BJ (cell line): ENCODE measurements at regions of chr11 and their contacts with region 1.

Region 1: DNA sequence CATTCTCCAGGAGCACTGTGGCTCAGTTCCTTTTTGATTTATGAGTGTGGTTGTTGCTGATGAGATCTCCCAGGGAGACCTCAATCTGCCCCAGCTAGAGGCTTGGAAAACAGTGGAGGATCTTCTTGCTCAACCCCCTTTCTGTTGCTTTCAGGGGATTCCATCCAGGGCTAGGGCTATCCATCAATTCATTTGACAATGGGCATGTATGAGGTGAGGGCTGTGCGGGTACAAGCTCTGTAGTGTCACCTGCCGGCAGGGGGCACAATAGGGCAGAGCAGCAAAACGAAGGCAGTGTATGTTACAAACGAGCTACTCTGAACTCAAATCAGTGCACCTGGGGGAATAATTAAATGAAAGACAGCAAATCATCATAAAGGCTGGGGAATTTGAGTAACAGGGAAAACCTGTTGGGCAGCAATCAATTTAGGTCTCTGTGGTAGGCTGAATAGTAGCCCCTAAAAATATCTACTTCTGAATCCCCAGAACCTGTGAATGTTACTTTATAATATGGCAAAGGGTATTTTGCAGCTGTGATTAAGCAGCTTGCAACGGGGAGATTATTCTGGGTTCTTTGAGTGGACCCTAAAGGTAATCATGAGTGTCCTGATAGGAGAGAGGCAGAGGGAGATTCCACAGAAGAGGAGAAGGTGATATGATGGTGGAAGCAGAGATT is 170.3 kb upstream of the ZBED5 start:
- DNase-seq: no peak
- H3K4me3 ChIP-seq: no peak overlapping the region
- H3K27me3 ChIP-seq: no peaks in the 10 kb centered on the region
- CTCF ChIP-seq: peak; percentile 85

Region 2: DNA sequence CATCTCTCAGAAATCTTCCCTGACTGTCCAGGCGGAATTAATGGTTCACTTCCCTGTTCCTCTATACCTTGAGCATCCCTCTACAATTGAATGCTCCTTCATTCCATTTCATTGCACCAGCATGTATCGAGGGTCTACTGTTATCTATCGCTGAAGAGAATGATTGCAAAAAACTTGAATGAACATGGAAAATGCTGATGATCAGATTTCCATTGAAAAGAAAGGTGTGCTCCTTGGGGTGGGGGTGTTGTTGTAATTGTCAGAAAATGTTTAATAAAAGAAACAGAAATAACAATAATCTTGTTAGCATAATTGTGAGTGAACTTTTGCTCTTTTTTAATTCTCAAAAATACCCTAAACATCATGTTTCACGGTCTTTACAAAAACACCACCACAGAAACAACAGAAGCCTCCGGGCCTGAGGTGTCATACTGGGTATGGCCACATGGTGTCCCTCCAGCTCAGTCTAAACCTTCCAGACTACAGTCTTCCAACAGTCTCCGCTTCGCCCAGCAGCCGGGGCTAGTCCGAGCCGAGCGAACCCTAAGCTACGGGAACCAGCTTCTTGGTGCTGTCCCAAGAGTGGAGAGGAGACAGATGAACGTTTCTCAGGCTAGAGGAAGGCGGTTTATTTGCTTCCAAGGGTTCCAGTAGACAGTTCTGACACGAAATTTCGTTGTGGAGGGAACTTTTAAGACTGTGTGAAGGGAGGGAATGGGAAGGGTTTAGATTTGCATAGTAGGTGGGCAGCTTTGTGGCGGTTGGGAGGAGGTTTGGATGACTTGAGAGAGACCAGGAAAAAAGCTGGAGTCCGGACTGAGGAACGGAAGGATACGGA is 94.5 kb before region 1 on chr11:
- CTCF ChIA-PET with region 1: interaction called, 72 read pairs
- POLR2A ChIA-PET with region 1: no interaction called
- DNase-seq: peak; percentile 62
- H3K4me3 ChIP-seq: peak overlapping the region; percentile 49
- H3K27me3 ChIP-seq: no peaks in the 10 kb centered on the region
- CTCF ChIP-seq: peak; percentile 91

Region 3: GRCh38 chr11:11016068-11016467 is 12.1 kb before region 1 on chr11:
- CTCF ChIA-PET with region 1: interaction called, 20 read pairs
- POLR2A ChIA-PET with region 1: no interaction called
- DNase-seq: no peak
- H3K4me3 ChIP-seq: no peak overlapping the region
- H3K27me3 ChIP-seq: peaks cover 7% of the 10 kb centered on the region
- CTCF ChIP-seq: no peak

Region 4: GRCh38 chr11:11189506-11189905 is 161.4 kb after region 1 on chr11:
- CTCF ChIA-PET with region 1: no interaction called
- POLR2A ChIA-PET with region 1: no interaction called
- DNase-seq: no peak
- H3K4me3 ChIP-seq: no peak overlapping the region
- H3K27me3 ChIP-seq: no peaks in the 10 kb centered on the region
- CTCF ChIP-seq: no peak